ENCODE measurements at regions of chr11 and their contacts with region 1.

Region 1: DNA sequence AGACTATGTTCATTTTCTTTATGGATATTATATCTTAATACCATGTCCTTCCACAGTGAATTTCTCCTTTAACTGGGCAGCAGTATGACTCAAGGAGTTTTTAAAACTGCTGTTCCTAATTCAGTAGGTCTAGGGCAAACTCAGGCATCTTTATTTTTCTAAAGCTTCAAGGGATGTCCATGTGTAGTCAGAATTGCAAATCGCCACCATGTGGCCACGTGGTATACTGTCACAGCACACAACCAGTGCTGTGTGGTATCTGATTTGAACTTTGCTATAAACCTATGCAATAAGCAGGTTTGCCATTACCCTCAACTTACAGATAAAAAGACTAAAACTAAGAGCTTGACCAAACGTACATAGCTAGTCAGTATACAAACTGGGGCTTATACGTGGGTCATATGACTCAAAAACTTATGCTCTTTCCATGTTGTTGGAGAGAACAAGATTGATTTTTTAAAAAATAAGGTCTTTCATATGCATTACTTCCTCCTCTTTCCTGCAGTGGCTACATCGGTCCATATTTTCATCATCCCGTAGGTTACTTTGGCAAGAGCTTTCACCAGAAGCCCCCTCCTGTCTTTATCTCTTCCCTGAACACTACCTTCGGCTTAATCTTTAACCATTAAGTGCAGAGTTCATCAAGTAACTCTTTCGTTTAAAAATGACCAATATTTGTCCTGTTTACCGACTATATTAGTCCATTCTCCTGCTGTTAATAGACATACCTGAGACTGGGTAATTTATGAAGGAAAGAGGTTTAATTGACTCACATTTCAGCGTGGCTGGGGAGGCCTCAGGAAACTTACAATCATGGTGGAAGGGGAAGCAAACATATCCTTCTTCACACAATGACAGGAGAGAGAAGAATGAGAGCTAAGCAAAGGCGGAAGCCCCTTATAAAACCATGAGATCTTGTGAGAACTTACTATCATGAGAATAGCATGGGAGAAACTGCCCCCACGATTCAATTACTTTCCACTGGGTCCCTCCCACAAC is 8.0 kb upstream of the HTATIP2 start:
- DNase-seq: no peak
- ATAC-seq: no peak

Region 2: DNA sequence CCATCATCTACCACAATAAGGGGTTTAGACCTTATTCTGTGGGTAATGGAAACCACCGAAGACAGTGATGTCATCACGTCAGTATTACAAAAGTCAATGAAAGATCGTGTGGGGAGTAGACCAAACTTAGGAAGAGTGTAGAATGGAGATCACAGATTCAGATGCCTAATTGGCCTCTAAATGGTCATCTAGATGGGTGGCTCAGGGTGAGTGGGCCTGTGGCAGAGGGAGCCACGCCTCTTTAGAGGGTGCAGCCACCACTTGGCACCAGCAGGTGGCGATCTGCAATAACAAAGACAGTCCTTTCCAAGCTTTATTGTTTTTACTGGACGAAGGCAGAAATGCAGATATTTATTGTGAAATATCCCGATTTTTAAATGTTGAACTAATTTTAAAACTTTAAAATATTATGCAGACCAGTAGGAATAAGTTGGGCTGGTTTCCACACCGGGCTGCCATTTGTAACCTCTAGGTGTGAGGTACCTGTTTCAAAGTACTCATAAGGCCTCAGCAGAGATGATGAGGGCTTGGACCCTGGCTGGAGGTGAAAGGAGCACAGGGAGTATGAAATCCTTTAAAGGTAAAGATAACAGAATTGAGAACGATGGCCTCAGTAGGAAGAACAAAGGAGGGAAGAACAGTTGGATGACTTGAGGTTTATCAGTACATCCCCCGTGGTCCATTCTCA is 417.2 kb before region 1 on chr11:
- intact Hi-C with region 1: loop called (anchors 5 kb)
- DNase-seq: no peak
- ATAC-seq: peak; percentile 31

Region 3: DNA sequence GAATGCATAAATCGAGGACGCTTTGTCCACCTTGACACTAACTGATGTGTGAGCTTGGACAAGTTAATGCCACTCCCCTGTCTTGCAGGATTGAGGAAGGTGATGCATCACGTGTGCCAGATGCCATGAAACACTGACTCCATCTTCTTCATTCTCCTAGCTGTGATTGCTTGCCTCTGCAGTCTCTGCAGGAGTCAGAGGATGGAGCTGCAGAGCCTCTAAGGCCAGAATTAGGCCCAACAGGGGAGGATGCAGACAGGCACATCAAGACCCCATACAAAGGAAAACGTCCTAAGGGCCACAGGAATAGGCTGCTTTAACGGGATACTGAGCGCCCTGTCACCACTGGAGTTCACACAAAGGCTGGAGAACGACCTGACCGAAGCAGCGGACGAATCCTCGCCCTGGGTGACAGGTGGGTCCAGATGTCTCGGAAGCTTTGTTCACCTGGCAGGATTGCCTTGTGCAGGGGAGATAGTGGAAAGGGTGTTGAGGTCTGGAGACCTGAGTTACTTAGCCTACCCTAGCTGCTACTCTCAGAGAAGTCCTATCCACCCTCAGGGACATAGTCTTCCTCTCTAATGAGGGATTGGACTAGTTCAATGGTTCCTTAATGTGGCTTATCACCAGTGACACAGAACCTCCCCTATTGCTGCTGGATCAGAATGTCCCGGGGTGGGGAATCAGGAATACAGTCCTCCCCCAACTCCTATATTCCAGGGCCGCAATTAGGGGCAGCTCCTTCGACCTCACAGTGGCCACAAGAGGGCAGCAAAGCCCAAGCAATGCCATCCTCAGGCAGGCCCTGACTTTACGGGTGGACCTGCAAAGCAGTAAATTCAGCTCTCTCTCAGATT is 227.6 kb before region 1 on chr11:
- intact Hi-C with region 1: loop called (anchors 2 kb)
- DNase-seq: peak; percentile 82
- ATAC-seq: peak; percentile 68

Region 4: GRCh38 chr11:20289732-20290131 is 65.8 kb before region 1 on chr11:
- intact Hi-C with region 1: no loop called
- DNase-seq: no peak
- ATAC-seq: no peak